IMR-90 (cell line): ENCODE measurements at regions of chr15 and their contacts with region 1.

Region 1: DNA sequence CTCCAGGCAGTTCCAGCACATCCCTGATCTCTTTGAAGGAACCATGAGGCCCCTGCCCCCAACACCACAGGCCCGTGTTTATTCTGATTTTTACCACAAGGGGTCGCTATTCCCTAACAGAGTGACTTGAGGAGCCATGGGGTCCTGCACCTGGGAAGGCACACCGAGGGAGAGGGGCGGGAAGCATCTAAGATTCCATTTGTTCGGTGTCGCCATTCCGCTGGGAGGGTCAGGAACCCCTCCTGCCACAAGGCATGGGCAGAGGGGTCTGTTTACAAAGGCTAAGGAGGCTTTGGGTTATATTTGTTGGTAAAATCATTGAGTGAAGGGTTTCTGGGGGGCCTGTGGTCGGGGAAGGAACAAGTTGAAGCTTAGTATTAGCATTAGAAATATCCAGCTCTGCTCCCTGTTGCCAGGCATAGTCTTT is 77.1 kb downstream of the WDR76 start:
- DNase-seq: peak; percentile 58
- ATAC-seq: peak; percentile 94
- H3K4me3 ChIP-seq: no peak overlapping the region
- H3K27ac ChIP-seq: no peak overlapping the region
- H3K4me1 ChIP-seq: peaks cover 5% of the 10 kb centered on the region; the same call in 1 of the 2 replicates
- H3K27me3 ChIP-seq: no peaks in the 10 kb centered on the region
- CTCF ChIP-seq: peak; percentile 94
- POLR2A ChIP-seq: no peak
- RAD21 ChIP-seq: peak; percentile 97

Region 2: GRCh38 chr15:44009056-44009455 is 105.2 kb after region 1 on chr15:
- CTCF ChIA-PET with region 1: no interaction called
- POLR2A ChIA-PET with region 1: no interaction called
- dilution Hi-C with region 1: no loop called
- in situ Hi-C with region 1: no loop called
- intact Hi-C with region 1: no loop called
- DNase-seq: peak; percentile 82
- ATAC-seq: peak; percentile 73
- H3K4me3 ChIP-seq: no peak overlapping the region
- H3K27ac ChIP-seq: no peak overlapping the region
- H3K4me1 ChIP-seq: peaks cover 6% of the 10 kb centered on the region
- H3K27me3 ChIP-seq: 0 out of 2 replicates have a peak, but pooled peaks cover 1% of the 10 kb centered on the region
- CTCF ChIP-seq: no peak
- POLR2A ChIP-seq: no peak
- RAD21 ChIP-seq: no peak

Region 3: DNA sequence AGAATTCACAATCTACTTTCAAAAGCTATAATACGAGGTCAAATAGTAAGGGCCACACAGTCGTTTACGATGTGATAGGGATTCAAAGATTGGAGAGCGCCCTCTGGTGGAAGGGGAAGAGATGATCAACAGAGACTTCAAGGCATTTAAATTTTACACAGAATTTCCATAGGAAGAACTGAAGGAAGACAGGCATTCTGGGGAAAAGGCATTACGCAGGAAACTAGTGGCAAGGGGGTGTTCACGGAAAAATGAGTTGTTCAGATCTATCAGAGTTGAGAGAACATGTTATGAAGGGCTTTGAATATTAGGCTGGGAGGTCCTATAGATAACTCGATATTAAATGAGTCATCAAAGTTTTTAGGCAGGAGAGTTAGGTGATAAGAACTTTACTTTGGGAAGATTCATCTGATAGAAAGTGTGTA is 162.5 kb after region 1 on chr15:
- CTCF ChIA-PET with region 1: interaction called, 9 read pairs
- POLR2A ChIA-PET with region 1: no interaction called
- dilution Hi-C with region 1: no loop called
- in situ Hi-C with region 1: loop called (anchors 25 kb)
- intact Hi-C with region 1: loop called (anchors 1 kb)
- DNase-seq: peak; percentile 72
- ATAC-seq: peak; percentile 79
- H3K4me3 ChIP-seq: no peak overlapping the region
- H3K27ac ChIP-seq: no peak overlapping the region
- H3K4me1 ChIP-seq: no peaks in the 10 kb centered on the region
- H3K27me3 ChIP-seq: no peaks in the 10 kb centered on the region
- CTCF ChIP-seq: peak; percentile 85
- POLR2A ChIP-seq: no peak
- RAD21 ChIP-seq: peak; percentile 79